Left cardiac atrium (tissue), 4 donors: ENCODE measurements at regions of chr1 and their contacts with region 1.

Region 1: DNA sequence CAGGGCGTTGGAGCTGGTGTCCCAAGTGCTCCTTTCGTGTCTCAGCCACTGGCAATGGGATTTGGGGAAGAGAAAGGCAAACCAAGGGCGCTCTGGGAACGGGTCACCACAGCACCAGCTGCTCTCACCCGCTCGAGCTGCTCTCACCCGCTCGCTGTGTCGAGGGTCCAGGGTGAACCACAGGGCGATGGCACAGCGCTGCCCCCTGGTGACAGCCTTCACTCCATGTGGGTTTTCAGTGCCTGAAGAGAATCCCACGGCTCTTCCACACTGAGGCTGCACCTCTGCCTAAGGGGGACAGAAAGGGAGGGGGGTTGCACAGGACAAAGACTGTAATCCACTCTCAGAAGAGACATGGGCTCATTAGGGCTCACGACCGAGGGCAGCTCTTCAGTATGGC is 7.1 kb upstream of the CLDN19 start:
- DNase-seq: peak; percentile 52
- ATAC-seq: peak; percentile 60 to 70

Region 2: GRCh38 chr1:42146626-42147320 is 600.4 kb before region 1 on chr1:
- intact Hi-C with region 1: loop called in 1 of 2 experiments (anchors 10 kb)
- DNase-seq: peak; percentile 58
- ATAC-seq: peak; percentile 64 to 81

Region 3: DNA sequence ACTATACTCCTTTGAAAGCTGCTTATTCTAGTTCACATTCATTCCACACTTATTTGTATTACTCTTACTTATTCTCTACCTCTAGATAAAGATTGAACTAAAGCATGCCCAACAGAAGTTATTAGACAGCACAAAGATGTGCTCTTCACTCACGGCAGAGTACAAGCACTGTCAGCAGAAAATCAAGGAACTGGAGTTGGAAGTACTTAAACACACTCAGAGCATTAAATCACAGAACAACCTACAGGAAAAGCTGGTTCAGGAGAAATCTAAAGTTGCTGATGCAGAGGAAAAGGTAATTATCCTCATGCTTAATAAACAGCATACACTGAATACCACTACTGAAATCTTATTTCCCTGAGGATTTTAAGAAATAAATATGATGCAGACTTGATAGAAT is 170.2 kb before region 1 on chr1:
- intact Hi-C with region 1: loop called (anchors 1 to 5 kb)
- DNase-seq: no peak
- ATAC-seq: no peak

Region 4: GRCh38 chr1:42586016-42586415 is 161.1 kb before region 1 on chr1:
- intact Hi-C with region 1: loop called in 1 of 2 experiments (anchors 5 kb)
- DNase-seq: no peak
- ATAC-seq: no peak

Region 5: DNA sequence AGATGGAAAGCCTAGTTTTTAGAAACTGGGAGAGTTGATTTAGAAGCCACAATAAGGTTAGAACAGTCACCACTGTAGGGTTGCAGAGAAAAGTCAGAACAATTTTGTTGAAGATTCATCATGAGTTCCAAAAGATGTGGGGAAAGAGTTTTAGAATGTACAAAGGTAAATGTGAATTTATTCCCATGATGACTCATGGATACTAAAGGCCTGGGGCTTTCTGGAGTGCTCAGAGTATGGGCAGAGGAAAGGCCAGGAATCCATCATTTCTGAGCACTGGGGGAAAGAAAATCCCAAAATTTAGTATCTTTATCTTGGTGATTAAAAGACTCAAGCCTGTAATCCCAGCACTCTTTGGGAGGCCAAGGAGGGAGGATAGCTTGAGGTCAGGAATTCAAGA is 47.1 kb before region 1 on chr1:
- intact Hi-C with region 1: no loop called
- DNase-seq: no peak
- ATAC-seq: no peak

Region 6: DNA sequence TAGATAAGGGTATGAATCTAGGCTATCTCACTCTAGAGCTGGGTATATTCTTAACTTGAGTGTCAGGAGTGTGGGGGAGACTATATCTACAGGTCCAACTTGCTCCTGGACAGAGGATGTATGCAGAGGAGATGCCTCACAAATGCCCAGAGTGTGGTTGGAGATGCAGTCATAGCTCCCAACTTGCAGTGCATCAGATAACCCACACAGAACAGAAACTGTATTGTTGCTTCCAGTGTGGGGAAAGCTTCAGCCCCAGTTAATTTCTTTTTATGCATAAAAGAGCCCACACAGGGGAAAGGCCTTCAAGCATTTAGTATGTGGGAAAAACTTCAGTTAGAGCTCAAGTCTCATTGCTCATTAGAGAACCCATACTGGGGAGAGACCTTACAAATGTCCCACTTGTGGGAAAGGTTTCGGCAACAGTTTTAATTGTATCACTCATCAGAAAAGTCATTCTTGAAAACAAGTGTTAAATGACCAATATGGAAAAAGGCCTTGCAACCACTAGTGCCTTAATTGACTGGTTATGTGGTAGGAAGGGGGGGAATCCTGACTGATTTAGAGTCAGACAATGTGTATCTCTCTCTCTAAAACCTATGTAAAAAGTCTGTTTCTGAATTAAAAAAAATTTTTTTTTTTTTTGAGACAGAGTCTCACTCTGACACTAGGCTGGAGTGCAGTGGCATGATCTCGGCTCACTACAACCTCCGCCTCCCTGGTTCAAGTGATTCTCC is 357.1 kb after region 1 on chr1:
- intact Hi-C with region 1: no loop called
- DNase-seq: no peak
- ATAC-seq: no peak